ENCODE measurements at regions of chr2 and their contacts with region 1.

Region 1: GRCh38 chr2:235694721-235695601 is 201.1 kb downstream of the AGAP1 start:
- DNase-seq: no peak
- H3K4me3 ChIP-seq: no peak overlapping the region
- H3K27ac ChIP-seq: no peak overlapping the region
- H3K4me1 ChIP-seq: no peaks in the 10 kb centered on the region
- H3K27me3 ChIP-seq: no peaks in the 10 kb centered on the region
- CTCF ChIP-seq: no peak
- EP300 ChIP-seq: no peak
- POLR2A ChIP-seq: no peak

Region 2: GRCh38 chr2:235734688-235735231 is 39.8 kb after region 1 on chr2:
- intact Hi-C with region 1: loop called in 1 of 4 experiments (anchors 1 kb)
- DNase-seq: no peak
- H3K4me3 ChIP-seq: no peak overlapping the region
- H3K27ac ChIP-seq: no peak overlapping the region
- H3K4me1 ChIP-seq: no peaks in the 10 kb centered on the region
- H3K27me3 ChIP-seq: no peaks in the 10 kb centered on the region
- CTCF ChIP-seq: no peak
- EP300 ChIP-seq: no peak
- POLR2A ChIP-seq: no peak

Measured in ovary (tissue), 10 donors.